OCI-LY7 (cell line): ENCODE measurements at regions of chr3 and their contacts with region 1.

Region 1: DNA sequence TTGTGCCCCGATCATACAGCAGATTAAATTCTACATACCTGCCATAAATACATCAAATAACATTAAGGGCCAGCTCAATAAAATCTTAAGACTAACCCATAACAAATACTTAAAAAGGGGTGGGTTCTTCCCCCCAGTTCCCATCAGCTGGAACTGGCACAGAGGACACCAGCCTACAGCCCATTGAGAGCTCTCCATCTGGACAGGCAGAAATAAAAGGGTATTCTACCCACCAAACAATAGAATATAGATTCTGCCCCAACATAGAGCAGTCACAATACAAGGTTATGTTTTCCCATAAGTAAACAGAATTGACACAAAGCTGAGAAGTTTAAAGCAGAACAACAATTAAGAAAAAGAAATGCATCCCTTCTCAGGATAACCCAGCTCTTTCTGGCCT is 11.9 kb downstream of the CPOX start:
- DNase-seq: no peak
- H3K4me3 ChIP-seq: no peak overlapping the region
- H3K27ac ChIP-seq: no peak overlapping the region
- H3K4me1 ChIP-seq: no peaks in the 10 kb centered on the region
- CTCF ChIP-seq: no peak

Region 2: GRCh38 chr3:98032904-98033303 is 548.6 kb before region 1 on chr3:
- CTCF ChIA-PET with region 1: interaction called, 3 read pairs
- POLR2A ChIA-PET with region 1: no interaction called
- intact Hi-C with region 1: loop called (anchors 5 kb)
- DNase-seq: no peak
- H3K4me3 ChIP-seq: no peak overlapping the region
- H3K27ac ChIP-seq: no peak overlapping the region
- H3K4me1 ChIP-seq: no peaks in the 10 kb centered on the region
- CTCF ChIP-seq: no peak

Region 3: GRCh38 chr3:98322101-98322500 is 259.4 kb before region 1 on chr3:
- CTCF ChIA-PET with region 1: no interaction called
- POLR2A ChIA-PET with region 1: interaction called, 11 read pairs
- intact Hi-C with region 1: no loop called
- DNase-seq: no peak
- H3K4me3 ChIP-seq: no peak overlapping the region
- H3K27ac ChIP-seq: no peak overlapping the region
- H3K4me1 ChIP-seq: no peaks in the 10 kb centered on the region
- CTCF ChIP-seq: no peak